ENCODE measurements at regions of chr11 and their contacts with region 1.

Region 1: DNA sequence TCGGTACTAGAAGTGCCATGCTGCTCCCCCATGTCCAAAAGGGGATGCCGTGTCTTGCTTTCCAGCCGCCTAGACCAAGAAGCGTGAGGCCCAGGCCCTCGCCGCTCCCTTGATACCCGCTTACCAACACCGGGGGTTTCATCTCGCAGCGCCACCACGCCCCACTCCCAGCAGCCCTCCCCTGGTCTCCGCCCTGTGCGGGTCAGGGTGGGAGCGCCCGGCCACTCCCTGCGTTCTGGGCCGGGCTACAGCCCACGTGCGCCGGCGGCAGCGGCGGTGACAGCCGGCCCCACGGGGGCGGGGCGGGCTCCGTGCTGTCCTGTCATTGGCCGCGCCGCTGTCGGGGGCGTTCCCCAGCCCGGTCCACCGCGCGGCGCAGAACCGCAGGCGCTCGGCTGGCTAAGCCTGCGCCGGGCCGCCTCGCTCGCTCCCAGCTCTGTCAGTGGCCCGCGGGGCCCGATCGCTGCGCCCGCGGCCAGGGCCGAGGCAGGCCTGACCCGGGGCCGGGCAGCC is at the start of gene MICAL2:
- DNase-seq: peak; percentile 82 to 92 (median 85)
- H3K4me3 ChIP-seq: peak within 1 kb of the TSS; percentile 72
- H3K27ac ChIP-seq: peak within 1 kb of the TSS; percentile 53 to 66
- H3K4me1 ChIP-seq: peaks cover 4% of the 10 kb centered on the region
- H3K27me3 ChIP-seq: no peaks in the 10 kb centered on the region
- CTCF ChIP-seq: no peak
- EP300 ChIP-seq: no peak
- POLR2A ChIP-seq: peak; percentile 59
- total RNA-seq, gene MICAL2: 11.0 to 68.5 (median 32.5) TPM

Region 2: GRCh38 chr11:12224537-12224893 is 114.3 kb after region 1 on chr11:
- intact Hi-C with region 1: loop called in 1 of 4 experiments (anchors 10 kb)
- DNase-seq: peak in 2 of 5 donors; percentile 32 to 42
- H3K4me3 ChIP-seq: no peak overlapping the region
- H3K27ac ChIP-seq: no peak overlapping the region
- H3K4me1 ChIP-seq: peaks cover 16% of the 10 kb centered on the region
- H3K27me3 ChIP-seq: no peaks in the 10 kb centered on the region
- CTCF ChIP-seq: no peak
- EP300 ChIP-seq: no peak
- POLR2A ChIP-seq: no peak

Region 3: GRCh38 chr11:12235947-12236743 is 125.9 kb after region 1 on chr11:
- intact Hi-C with region 1: loop called in 1 of 4 experiments (anchors 10 kb)
- DNase-seq: peak in 2 of 5 donors; percentile 27 to 33
- H3K4me3 ChIP-seq: no peak overlapping the region
- H3K27ac ChIP-seq: peak overlapping the region; percentile 48 to 51
- H3K4me1 ChIP-seq: peaks cover 7% of the 10 kb centered on the region
- H3K27me3 ChIP-seq: no peaks in the 10 kb centered on the region
- CTCF ChIP-seq: peak; percentile 43 to 74 (median 73)
- EP300 ChIP-seq: no peak
- POLR2A ChIP-seq: no peak